HEK293 (cell line): ENCODE measurements at regions of chr17 and their contacts with region 1.

Region 1: GRCh38 chr17:78828470-78829185 is 12.0 kb downstream of the USP36 start:
- H3K4me3 ChIP-seq: no peak overlapping the region
- H3K27ac ChIP-seq: no peak overlapping the region
- H3K4me1 ChIP-seq: no peaks in the 10 kb centered on the region
- CTCF ChIP-seq: no peak

Region 2: DNA sequence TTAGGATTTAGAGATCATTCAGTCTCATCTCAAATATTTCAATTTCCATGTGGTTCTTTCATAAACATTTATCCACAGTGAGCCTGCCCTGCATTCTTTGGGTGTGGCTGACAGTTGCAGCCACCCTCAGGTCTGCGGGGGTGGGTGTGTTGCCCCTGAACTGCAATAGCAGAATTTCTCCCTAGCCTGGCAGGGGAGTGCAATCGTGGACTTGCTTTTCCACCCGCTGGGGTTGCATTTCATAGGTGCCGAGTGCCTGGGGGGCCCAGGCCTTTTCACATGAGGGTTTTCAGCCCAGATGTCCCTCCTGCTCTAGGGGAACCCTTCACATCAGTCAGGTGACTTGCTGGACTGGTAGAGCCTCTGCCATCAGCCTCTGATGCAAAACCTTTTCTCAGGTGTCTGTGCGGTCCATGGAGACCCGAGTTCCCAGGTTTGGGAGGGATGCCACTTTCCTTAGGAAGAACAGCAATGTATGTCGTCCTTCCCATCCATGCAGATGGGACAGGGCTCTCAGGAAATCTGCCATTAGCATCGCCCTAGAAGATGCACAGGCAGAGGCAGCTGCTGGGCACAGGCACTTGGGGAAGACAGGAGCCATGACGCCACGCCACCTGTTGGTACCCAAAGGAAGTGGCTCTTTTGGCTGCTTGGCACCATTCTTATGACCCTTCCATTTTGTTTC is 14.4 kb after region 1 on chr17:
- CTCF ChIA-PET with region 1: interaction called, 14 read pairs
- POLR2A ChIA-PET with region 1: interaction called, 6 read pairs
- H3K4me3 ChIP-seq: no peak overlapping the region
- H3K27ac ChIP-seq: no peak overlapping the region
- H3K4me1 ChIP-seq: peaks cover 8% of the 10 kb centered on the region; the same call in 1 of the 2 replicates
- CTCF ChIP-seq: peak; percentile 82